Left cardiac atrium (tissue), 4 donors: ENCODE measurements at regions of chr9 and their contacts with region 1.

Region 1: GRCh38 chr9:35481347-35481975 is 8.4 kb upstream of the RUSC2 start:
- DNase-seq: peak; percentile 40
- ATAC-seq: peak; percentile 53 to 60

Region 2: DNA sequence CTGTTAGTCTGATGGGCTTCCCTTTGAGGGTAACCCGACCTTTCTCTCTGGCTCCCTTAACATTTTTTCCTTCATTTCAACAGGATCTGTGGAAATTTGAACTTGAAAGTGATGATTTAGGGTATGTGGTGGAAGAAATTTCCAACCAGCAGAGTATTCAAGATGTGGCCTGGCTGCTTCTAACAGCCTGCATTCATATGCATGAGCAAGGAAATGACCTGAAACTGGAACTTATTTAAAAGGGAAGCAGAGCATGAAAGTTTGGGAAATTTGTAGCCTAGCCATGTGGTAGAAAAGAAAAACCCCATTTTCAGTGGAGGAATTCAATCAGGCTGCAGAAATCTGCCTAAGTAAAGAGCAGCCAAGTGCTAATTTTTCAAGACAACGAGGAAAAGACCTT is 277.9 kb before region 1 on chr9:
- intact Hi-C with region 1: no loop called
- DNase-seq: no peak
- ATAC-seq: no peak

Region 3: DNA sequence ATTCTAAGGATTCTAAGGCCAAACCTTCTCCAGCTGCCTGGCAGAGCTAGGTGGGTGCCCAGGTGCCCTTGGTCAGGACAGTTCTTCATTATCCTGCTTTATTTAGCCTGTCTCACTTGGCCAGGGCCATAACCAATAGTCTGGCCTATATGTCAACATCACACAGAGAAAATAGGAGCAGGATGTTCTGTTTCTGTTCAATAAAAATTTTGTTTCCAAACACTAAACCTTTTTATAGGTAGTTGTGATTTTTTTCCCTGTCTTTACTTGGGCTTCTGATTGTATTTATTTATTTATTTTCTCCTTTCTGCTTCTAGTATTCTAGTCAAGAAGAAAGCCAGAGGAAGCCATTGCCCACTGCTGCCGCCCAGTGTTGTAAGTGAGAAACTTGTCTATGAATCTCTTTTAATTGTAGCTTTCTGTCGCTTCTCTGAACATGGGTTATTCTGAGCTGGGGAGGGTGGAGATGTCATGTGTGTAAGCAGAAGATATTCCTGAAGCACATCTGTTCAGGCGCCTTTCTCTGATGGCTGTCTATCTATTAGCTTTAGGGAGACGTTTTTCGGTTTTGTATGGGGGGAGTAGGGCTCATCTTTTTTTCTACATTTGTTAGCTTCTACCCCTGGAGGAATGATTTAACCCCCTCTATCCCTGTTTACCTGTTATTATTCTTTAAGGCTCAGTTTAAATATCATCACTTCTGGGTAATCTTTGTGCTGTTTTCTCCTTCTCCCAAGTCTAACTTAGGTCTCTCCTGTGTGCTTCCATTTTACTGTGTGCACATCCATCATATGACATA is 222.6 kb before region 1 on chr9:
- intact Hi-C with region 1: loop called in 1 of 2 experiments (anchors 5 kb)
- DNase-seq: peak; percentile 78
- ATAC-seq: peak; percentile 70 to 74

Region 4: GRCh38 chr9:35311891-35312639 is 169.4 kb before region 1 on chr9:
- intact Hi-C with region 1: loop called in 1 of 2 experiments (anchors 2 kb)
- DNase-seq: peak; percentile 38
- ATAC-seq: peak; percentile 86 to 92

Region 5: DNA sequence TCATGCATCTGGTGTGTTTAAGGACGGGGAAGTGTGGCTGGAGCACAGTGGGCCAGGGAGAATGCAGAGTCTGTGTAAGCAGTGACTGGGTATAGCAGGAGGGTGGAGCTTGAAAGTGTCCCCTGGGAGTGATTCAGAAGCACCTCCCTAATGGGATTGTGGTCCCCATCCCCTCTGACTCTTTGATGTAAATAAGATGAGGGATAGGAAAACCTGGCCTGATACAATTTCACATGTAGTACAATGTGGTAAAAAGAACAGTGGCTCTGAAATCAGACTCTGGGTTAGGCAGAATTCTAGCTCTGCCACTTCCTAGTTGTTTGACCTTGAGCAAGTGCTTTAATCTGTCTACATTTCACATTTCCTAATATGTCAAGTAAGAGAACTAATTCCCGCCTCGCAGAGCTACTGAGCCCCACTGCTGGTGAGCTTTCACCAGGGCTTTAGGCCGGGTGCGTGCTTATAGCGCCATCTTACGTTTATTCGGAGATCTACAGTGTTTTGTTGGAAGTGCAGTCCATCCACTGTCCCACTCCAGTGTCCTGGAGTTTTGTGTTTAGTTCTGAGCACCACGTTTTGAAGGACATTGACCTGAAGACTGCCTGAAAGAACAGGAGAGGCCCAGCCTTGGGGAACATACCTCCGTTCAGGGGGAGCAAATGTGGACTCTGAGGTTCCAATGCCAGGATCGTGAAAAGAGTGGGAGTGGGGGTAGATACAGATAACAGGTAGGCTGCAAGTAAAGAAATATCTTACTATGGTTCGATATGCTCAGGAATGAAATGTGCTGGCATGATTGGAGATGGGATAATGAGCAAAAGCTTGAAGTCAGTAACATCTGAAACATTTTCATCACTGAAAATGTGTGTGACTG is 72.4 kb after region 1 on chr9:
- intact Hi-C with region 1: loop called in 1 of 2 experiments (anchors 2 kb)
- DNase-seq: peak; percentile 77
- ATAC-seq: peak; percentile 88 to 89